ENCODE measurements at regions of chr17 and their contacts with region 1.

Region 1: GRCh38 chr17:35147375-35147905 is at the start of gene UNC45B:
- DNase-seq: no peak
- ATAC-seq: peak; percentile 92
- total RNA-seq, gene UNC45B: 223 TPM

Region 2: GRCh38 chr17:35242805-35243560 is 95.5 kb after region 1 on chr17 and contains the start of gene SLFN5:
- intact Hi-C with region 1: loop called (anchors 1 kb)
- DNase-seq: peak; percentile 96
- ATAC-seq: peak; percentile 97
- total RNA-seq, gene SLFN5: 11.2 TPM

Region 3: DNA sequence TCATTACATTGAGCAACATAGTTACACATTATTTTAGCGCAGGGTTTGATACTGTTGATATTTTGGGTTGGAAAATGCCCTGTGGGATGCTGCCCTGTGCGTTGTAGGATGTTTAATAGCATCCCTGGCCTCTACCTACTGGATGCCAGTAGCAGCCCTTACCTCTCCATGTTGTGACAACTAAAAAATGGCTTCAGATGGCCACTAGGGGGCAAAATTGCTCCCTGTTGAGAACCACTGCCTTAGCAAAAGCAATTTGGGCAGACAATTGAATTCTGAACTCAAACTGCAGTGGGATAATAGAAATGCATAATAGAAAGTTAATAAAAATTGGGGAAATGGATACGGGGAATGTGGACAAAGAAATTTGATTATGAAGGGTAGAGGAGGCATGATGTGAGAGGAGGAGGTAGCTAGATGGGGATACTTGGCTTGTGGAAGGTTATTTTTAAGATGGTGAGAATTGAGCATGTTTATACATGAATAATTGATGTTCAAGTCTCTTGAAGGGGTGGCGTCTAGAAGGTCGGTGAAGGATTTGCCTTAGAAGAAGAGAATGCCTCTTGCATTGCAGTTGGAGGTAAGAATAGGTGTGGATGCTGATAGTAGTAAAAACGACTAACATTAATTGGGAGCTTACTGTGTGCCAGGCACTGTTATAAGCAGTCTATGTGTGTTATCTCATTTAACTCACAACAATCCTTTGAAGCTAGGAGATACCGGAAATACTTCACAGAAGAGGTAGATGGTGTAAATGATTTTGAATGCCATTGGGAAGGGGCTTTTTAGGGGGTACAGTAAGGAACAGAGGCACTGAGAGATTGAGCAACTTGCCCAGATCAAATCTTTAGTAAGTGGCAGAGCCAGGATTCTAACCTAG is 702.3 kb after region 1 on chr17:
- intact Hi-C with region 1: no loop called
- DNase-seq: no peak
- ATAC-seq: no peak